Activated naive CD4-positive, alpha-beta T cell treated with anti-CD3 and anti-CD28 coated beads for 36 hours (primary cell): ENCODE measurements at regions of chrX and their contacts with region 1.

Region 1: GRCh38 chrX:64894454-64895038 is 81.7 kb downstream of the ZC4H2 start:
- DNase-seq: peak; percentile 56
- H3K4me3 Mint-ChIP-seq: no peak overlapping the region
- H3K27ac Mint-ChIP-seq: no peak overlapping the region
- H3K4me1 Mint-ChIP-seq: peaks cover 3% of the 10 kb centered on the region
- H3K27me3 Mint-ChIP-seq: no peaks in the 10 kb centered on the region

Region 2: DNA sequence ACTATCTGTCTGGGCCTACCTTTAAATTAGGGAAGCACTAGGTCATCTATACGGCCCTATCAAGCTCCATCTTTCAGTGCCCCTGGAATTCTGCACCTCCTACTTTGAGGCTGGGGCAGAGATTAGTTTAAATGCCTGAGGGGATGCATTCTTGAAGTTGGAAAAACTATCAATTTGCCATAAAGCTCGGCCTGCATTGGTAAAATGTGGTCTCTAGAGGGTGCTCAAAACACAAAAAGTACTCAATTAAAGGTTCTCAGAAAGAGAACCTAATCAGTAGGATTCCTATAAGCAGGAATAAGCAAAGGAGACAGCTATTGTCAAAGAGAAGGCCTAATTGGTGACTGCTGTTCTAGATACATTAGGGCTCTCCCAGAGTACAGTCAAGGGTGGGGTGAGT is 800.8 kb before region 1 on chrX:
- CTCF ChIA-PET with region 1: no interaction called
- intact Hi-C with region 1: loop called (anchors 10 kb)
- DNase-seq: no peak
- H3K4me3 Mint-ChIP-seq: no peak overlapping the region
- H3K27ac Mint-ChIP-seq: no peak overlapping the region
- H3K4me1 Mint-ChIP-seq: no peaks in the 10 kb centered on the region
- H3K27me3 Mint-ChIP-seq: no peaks in the 10 kb centered on the region

Region 3: DNA sequence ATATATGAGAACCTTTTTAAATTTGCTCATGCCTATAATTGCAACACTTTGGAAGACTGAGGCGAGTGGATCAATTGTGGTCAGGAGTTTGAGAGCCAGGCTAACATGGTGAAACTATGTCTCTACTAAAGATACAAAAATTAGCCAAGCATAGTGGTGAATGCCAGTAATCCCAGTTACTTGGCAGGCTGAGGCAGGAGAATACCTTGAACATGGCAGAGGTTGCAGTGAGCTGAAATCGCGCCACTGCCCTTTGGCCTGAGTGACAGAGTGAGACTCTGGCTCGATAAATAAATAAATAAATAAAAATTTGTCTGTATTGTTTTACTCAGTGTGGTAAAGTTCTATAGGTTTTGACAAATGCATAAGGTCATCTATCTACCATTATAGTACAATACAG is 136.5 kb before region 1 on chrX:
- CTCF ChIA-PET with region 1: no interaction called
- intact Hi-C with region 1: loop called (anchors 5 kb)
- DNase-seq: no peak
- H3K4me3 Mint-ChIP-seq: no peak overlapping the region
- H3K27ac Mint-ChIP-seq: no peak overlapping the region
- H3K4me1 Mint-ChIP-seq: peaks cover 13% of the 10 kb centered on the region
- H3K27me3 Mint-ChIP-seq: no peaks in the 10 kb centered on the region

Region 4: GRCh38 chrX:65451663-65452062 is 557.1 kb after region 1 on chrX:
- CTCF ChIA-PET with region 1: no interaction called
- intact Hi-C with region 1: loop called (anchors 1 kb)
- DNase-seq: peak; percentile 26
- H3K4me3 Mint-ChIP-seq: no peak overlapping the region
- H3K27ac Mint-ChIP-seq: no peak overlapping the region
- H3K4me1 Mint-ChIP-seq: no peaks in the 10 kb centered on the region
- H3K27me3 Mint-ChIP-seq: no peaks in the 10 kb centered on the region

Region 5: GRCh38 chrX:65463550-65463949 is 569.0 kb after region 1 on chrX:
- CTCF ChIA-PET with region 1: no interaction called
- intact Hi-C with region 1: no loop called
- DNase-seq: no peak
- H3K4me3 Mint-ChIP-seq: no peak overlapping the region
- H3K27ac Mint-ChIP-seq: no peak overlapping the region
- H3K4me1 Mint-ChIP-seq: no peaks in the 10 kb centered on the region
- H3K27me3 Mint-ChIP-seq: no peaks in the 10 kb centered on the region

Region 6: DNA sequence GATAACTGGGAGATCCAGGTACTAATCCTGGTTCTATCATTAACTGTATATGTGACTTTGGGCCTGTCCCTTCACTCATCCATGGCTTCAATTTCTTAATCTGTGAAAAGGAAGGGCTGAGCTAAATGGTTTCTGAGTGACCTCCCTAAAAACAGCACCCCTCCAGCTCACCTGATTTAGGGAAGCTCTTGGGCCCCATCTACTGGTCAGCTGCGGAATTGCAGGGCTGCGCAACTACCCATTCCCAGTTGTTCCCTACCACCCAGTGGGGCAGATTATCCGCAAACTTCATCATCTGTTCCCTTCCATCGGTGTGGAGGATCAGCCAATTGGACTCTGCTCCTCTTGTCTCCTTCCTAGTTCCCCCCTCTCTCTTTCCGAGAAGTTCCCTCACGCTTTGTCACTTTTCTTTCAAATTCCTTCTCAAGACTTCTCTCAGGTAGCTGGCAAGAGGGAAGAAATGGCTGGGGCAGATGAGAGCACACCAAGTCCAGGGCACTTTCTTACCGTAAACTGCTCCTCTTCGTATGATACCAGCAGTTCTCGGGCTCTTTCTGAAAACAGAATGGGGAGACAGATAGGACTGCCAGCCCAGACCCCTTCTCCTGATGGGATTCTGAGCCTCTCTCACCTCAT is 634.3 kb after region 1 on chrX:
- CTCF ChIA-PET with region 1: no interaction called
- intact Hi-C with region 1: loop called (anchors 2 kb)
- DNase-seq: peak; percentile 59
- H3K4me3 Mint-ChIP-seq: no peak overlapping the region
- H3K27ac Mint-ChIP-seq: no peak overlapping the region
- H3K4me1 Mint-ChIP-seq: peaks cover 17% of the 10 kb centered on the region
- H3K27me3 Mint-ChIP-seq: no peaks in the 10 kb centered on the region